ENCODE measurements at regions of chr15 and their contacts with region 1.

Region 1: DNA sequence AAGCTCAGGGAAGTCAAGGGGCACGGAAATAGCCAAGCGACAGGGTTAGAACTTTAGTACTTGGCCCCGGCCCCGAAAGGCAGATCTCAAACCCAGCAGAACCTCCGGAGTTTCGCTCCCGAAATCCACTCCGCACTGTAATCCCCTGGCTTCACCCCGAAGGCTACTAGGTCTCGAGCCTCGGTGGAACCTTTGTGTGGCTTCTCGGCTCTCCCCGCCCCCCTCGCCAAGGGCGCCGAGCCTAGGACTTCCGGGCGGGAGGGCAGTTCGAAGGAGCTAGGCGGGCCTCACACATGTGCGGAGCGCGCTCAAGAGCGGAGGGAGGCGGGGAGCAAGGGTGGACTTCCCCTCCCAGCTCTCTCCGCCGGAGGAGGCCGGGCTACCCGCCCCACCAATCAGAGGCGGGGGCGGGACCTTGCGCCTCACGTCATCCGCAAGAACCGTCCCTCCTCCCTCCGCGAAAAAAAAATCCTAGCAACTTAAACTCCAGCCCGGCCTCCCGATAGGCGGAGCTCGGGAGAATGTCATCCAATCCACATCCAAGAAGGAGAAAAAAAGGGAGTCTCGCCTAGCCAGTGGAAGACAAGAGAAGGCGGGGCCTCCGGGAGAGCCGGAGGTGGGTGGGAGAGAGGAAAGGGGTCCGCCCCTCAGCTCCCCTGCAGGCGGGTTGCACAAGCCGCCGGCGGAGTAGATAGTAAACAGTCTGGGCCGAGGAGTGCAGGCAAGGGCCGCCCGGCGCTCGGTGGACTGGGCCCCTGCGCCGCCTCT is 2.4 kb upstream of the SIN3A start:
- DNase-seq: peak; percentile 93 to 100 (median 95)
- ATAC-seq: peak; percentile 39
- H3K4me3 ChIP-seq: peak overlapping the region; percentile 86 to 96
- H3K4me3 Mint-ChIP-seq: peak overlapping the region; percentile 92
- H3K27ac ChIP-seq: peak overlapping the region; percentile 83 to 92
- H3K27ac Mint-ChIP-seq: peak overlapping the region; percentile 99
- H3K4me1 ChIP-seq: peaks cover 23% of the 10 kb centered on the region
- H3K4me1 Mint-ChIP-seq: peaks cover 37% of the 10 kb centered on the region
- H3K27me3 ChIP-seq: no peaks in the 10 kb centered on the region
- H3K27me3 Mint-ChIP-seq: no peaks in the 10 kb centered on the region
- CTCF ChIP-seq: no peak

Region 2: GRCh38 chr15:73991726-73992593 is 1461.9 kb before region 1 on chr15 and contains the start of gene STOML1:
- CTCF ChIA-PET with region 1: no interaction called
- POLR2A ChIA-PET with region 1: no interaction called
- intact Hi-C with region 1: loop called in 1 of 2 experiments (anchors 5 kb)
- DNase-seq: peak; percentile 88 to 97 (median 96)
- ATAC-seq: peak; percentile 79
- H3K4me3 ChIP-seq: peak within 1 kb of the TSS; percentile 62 to 88
- H3K4me3 Mint-ChIP-seq: peak within 1 kb of the TSS; percentile 100
- H3K27ac ChIP-seq: peak within 1 kb of the TSS; percentile 53
- H3K27ac Mint-ChIP-seq: peak within 1 kb of the TSS; percentile 73
- H3K4me1 ChIP-seq: peaks cover 42% of the 10 kb centered on the region
- H3K4me1 Mint-ChIP-seq: peaks cover 48% of the 10 kb centered on the region
- H3K27me3 ChIP-seq: no peaks in the 10 kb centered on the region
- H3K27me3 Mint-ChIP-seq: no peaks in the 10 kb centered on the region
- CTCF ChIP-seq: peak; percentile 95
- total RNA-seq, gene STOML1: 2.5 to 4.8 TPM

Region 3: DNA sequence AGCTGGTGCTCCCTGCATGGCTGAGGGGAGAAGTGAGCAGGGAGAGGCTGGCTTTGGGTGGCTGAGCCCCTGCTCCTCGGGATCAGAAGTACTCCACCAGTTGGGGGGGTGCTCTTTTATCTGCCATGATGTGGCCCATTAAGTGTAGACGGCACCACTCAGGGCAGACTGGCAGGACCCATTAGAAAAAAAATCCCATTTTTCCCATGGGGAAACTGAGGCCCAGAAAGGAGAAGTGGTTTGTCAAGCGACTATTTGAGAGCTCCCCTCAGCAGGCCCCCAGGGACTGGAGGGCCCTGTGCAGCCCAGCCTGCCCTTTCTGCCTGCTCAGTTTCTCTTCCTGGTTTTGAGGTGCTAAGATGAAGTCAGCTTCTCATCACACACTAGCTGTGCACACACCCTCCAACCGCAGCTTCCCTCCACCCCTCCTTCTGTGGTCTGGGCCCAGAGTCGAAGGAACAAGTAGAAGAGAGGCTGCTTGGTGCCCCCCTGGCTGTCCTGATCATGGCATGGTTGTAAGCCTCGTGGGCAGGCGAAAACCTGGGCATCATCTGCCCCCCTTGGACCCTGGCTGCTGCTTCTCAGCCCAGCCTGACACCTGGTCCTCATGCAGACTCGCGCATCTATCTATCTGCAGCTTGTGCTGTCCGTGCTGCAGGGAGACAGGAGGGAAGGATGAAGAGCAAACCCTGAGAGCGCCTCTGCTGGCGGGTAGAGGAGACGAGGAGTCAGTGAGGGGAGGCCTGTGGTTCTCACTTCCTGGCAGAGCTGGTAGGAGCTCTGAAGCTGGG is 666.4 kb before region 1 on chr15:
- CTCF ChIA-PET with region 1: no interaction called
- POLR2A ChIA-PET with region 1: no interaction called
- intact Hi-C with region 1: loop called (anchors 2 to 5 kb)
- DNase-seq: peak; percentile 81 to 97 (median 92)
- ATAC-seq: peak; percentile 71
- H3K4me3 ChIP-seq: peak overlapping the region; percentile 83 to 98
- H3K4me3 Mint-ChIP-seq: peak overlapping the region; percentile 83
- H3K27ac ChIP-seq: peak overlapping the region; percentile 53 to 90
- H3K27ac Mint-ChIP-seq: peak overlapping the region; percentile 92
- H3K4me1 ChIP-seq: peaks cover 76% of the 10 kb centered on the region
- H3K4me1 Mint-ChIP-seq: peaks cover 71% of the 10 kb centered on the region
- H3K27me3 ChIP-seq: no peaks in the 10 kb centered on the region
- H3K27me3 Mint-ChIP-seq: no peaks in the 10 kb centered on the region
- CTCF ChIP-seq: peak; percentile 62

Region 4: GRCh38 chr15:75347222-75347878 is 106.5 kb before region 1 on chr15:
- CTCF ChIA-PET with region 1: no interaction called
- POLR2A ChIA-PET with region 1: interaction called, 3 read pairs
- intact Hi-C with region 1: loop called in 1 of 2 experiments (anchors 5 kb)
- DNase-seq: peak; percentile 28 to 80 (median 56)
- ATAC-seq: peak; percentile 57
- H3K4me3 ChIP-seq: peak overlapping the region; percentile 62 to 75
- H3K4me3 Mint-ChIP-seq: peak overlapping the region; percentile 87
- H3K27ac ChIP-seq: peak overlapping the region; percentile 28 to 54
- H3K27ac Mint-ChIP-seq: peak overlapping the region; percentile 86
- H3K4me1 ChIP-seq: peaks cover 41% of the 10 kb centered on the region
- H3K4me1 Mint-ChIP-seq: peaks cover 37% of the 10 kb centered on the region
- H3K27me3 ChIP-seq: no peaks in the 10 kb centered on the region
- H3K27me3 Mint-ChIP-seq: no peaks in the 10 kb centered on the region
- CTCF ChIP-seq: no peak

Region 5: GRCh38 chr15:75360391-75360790 is 93.5 kb before region 1 on chr15:
- CTCF ChIA-PET with region 1: no interaction called
- POLR2A ChIA-PET with region 1: no interaction called
- intact Hi-C with region 1: no loop called
- DNase-seq: no peak
- ATAC-seq: no peak
- H3K4me3 ChIP-seq: no peak overlapping the region
- H3K4me3 Mint-ChIP-seq: no peak overlapping the region
- H3K27ac ChIP-seq: no peak overlapping the region
- H3K27ac Mint-ChIP-seq: no peak overlapping the region
- H3K4me1 ChIP-seq: no peaks in the 10 kb centered on the region
- H3K4me1 Mint-ChIP-seq: no peaks in the 10 kb centered on the region
- H3K27me3 ChIP-seq: no peaks in the 10 kb centered on the region
- H3K27me3 Mint-ChIP-seq: no peaks in the 10 kb centered on the region
- CTCF ChIP-seq: no peak

Region 6: GRCh38 chr15:75625542-75626347 is 171.9 kb after region 1 on chr15 and contains the start of gene SNUPN:
- CTCF ChIA-PET with region 1: interaction called, 3 read pairs
- POLR2A ChIA-PET with region 1: interaction called, 28 read pairs
- intact Hi-C with region 1: loop called (anchors 1 kb)
- DNase-seq: peak; percentile 83 to 98 (median 93)
- ATAC-seq: peak; percentile 93
- H3K4me3 ChIP-seq: peak within 1 kb of the TSS; percentile 100
- H3K4me3 Mint-ChIP-seq: peak within 1 kb of the TSS; percentile 95
- H3K27ac ChIP-seq: peak within 1 kb of the TSS; percentile 75 to 99
- H3K27ac Mint-ChIP-seq: peak within 1 kb of the TSS; percentile 99
- H3K4me1 ChIP-seq: peaks cover 16% of the 10 kb centered on the region
- H3K4me1 Mint-ChIP-seq: peaks cover 34% of the 10 kb centered on the region
- H3K27me3 ChIP-seq: no peaks in the 10 kb centered on the region
- H3K27me3 Mint-ChIP-seq: no peaks in the 10 kb centered on the region
- CTCF ChIP-seq: no peak
- total RNA-seq, gene SNUPN: 7.7 TPM

Region 7: DNA sequence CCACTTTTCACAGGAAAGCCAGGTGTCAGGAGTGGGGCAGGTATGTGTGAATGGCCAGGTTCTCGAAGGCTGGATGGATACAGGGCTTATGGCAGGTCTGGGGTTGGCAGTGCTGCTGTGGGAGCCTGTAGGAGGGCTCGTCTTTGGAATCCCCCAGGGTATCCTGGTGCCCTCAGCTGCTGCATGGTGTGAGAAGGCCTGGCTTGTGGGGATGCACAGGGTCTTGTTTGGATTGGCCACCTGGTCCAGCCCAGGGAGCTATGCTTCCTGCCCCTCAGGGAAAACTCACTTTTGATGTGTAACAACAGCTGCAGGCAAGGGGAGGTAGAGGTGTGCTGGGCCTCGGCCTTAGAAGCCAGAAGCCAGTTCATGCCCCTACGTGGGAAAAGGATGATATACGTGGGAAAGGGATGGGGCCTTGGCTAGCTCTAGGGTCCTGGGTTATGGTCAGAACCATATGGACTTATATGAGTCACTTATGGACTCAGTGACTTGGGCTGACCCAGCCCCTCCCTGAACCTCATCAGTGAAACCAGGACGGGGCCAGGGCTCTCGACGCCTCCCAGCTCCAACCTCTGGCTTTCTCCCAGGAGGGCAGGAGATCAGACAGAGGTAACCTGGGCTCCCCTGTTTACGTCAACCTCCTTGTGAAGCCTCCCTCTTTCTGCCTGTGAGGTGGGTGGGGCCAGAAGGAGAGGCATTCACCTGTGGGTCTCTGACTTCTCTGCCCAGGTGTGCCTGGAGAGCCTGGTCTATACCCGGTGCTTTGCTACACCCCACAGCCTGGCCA is 296.6 kb after region 1 on chr15:
- CTCF ChIA-PET with region 1: no interaction called
- POLR2A ChIA-PET with region 1: no interaction called
- intact Hi-C with region 1: no loop called
- DNase-seq: no peak
- ATAC-seq: no peak
- H3K4me3 ChIP-seq: no peak overlapping the region
- H3K4me3 Mint-ChIP-seq: no peak overlapping the region
- H3K27ac ChIP-seq: no peak overlapping the region
- H3K27ac Mint-ChIP-seq: no peak overlapping the region
- H3K4me1 ChIP-seq: peaks cover 4% of the 10 kb centered on the region
- H3K4me1 Mint-ChIP-seq: peaks cover 7% of the 10 kb centered on the region
- H3K27me3 ChIP-seq: no peaks in the 10 kb centered on the region
- H3K27me3 Mint-ChIP-seq: peaks cover under 1% of the 10 kb centered on the region
- CTCF ChIP-seq: no peak

Region 8: DNA sequence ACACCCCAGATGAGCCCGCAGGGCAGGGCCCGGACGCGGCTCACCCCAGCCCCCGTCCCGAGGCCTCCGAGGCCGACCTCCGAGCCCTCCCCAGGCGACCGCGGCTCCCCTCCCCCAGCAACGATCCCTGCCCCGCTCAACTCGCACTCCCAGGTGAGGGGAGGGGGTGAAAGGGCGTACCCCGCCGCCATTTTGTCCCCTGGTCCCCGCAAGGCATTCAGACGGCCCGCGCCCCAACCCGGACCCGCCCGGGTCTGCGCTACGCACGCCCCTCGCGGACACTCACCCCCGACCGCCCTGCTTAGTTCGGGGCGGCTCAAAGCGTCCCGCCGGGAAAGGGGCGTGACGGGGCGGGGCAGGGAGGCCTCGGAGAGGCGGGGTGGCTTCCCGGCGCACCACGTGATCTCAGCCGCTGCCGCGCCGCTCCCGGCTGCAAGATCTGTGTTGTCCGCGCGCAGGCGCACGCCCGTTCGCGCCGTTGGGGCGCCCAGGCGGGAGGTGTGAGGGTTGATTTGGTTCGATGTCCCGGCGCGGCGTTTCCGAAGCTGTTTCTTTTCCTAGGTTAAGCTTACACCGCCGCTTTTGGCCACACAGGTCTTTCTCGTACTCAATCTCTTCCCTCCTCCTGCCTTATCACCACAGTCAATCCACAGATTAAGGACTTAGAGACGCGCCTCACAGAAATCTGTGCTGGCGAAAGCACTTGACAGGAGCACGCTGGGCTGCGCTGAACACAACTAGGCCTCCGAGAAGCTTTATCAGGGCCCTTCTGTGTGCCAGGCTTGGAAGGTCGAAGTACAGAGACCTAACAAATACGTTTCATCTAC is 1451.3 kb after region 1 on chr15 and contains the start of gene SCAPER:
- CTCF ChIA-PET with region 1: no interaction called
- POLR2A ChIA-PET with region 1: no interaction called
- intact Hi-C with region 1: loop called in 1 of 2 experiments (anchors 10 kb)
- DNase-seq: peak; percentile 72 to 95 (median 92)
- ATAC-seq: peak; percentile 86
- H3K4me3 ChIP-seq: peak within 1 kb of the TSS; percentile 82 to 88
- H3K4me3 Mint-ChIP-seq: peak within 1 kb of the TSS; percentile 91
- H3K27ac ChIP-seq: peak within 1 kb of the TSS; percentile 47 to 81
- H3K27ac Mint-ChIP-seq: peak within 1 kb of the TSS; percentile 96
- H3K4me1 ChIP-seq: peaks cover 24% of the 10 kb centered on the region
- H3K4me1 Mint-ChIP-seq: peaks cover 36% of the 10 kb centered on the region
- H3K27me3 ChIP-seq: no peaks in the 10 kb centered on the region
- H3K27me3 Mint-ChIP-seq: no peaks in the 10 kb centered on the region
- CTCF ChIP-seq: no peak
- total RNA-seq, gene SCAPER: 21.7 to 29.7 TPM

Measured in CD8-positive, alpha-beta T cell (primary cell).